Esophagus squamous epithelium (tissue), 5 donors: ENCODE measurements at regions of chr2 and their contacts with region 1.

Region 1: DNA sequence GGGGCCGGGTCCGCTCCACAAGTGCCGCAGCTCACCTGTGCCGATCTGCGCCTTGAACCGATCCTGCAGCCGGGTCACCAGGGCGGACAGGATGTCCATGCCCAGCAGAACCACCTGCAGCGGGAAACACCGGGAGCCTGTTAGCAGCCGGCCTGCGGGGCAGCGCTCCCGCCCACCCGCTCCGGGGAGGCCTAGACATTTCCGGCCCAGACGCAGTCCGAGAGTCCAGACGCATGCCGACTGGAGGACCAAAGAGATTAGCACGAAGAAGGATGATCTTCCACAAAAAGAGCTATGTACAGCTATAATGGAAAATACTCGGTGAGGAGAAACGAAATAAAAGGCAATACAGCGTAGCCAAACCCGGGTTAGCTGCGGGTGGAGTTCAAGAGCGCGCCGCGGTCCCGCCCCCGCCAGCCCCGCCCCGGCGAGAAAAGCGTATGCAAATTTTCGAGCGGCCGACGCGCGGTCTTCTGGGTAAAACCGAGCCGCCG is 421 bp upstream of the RNU4ATAC start:
- DNase-seq: peak; percentile 25
- H3K4me3 ChIP-seq: peak overlapping the region; percentile 57 to 86 (median 73)
- H3K27ac ChIP-seq: peak overlapping the region; percentile 92 to 98 (median 97)
- H3K4me1 ChIP-seq: peaks cover 37 to 87% (median 40%) of the 10 kb centered on the region in 3 donors
- H3K27me3 ChIP-seq: no peaks in the 10 kb centered on the region
- CTCF ChIP-seq: no peak
- POLR2A ChIP-seq: no peak

Region 2: GRCh38 chr2:121710470-121711170 is 180.4 kb after region 1 on chr2:
- intact Hi-C with region 1: loop called (anchors 10 kb)
- DNase-seq: no peak
- H3K4me3 ChIP-seq: no peak overlapping the region
- H3K27ac ChIP-seq: no peak overlapping the region
- H3K4me1 ChIP-seq: no peaks in the 10 kb centered on the region
- H3K27me3 ChIP-seq: no peaks in the 10 kb centered on the region
- CTCF ChIP-seq: no peak
- POLR2A ChIP-seq: no peak